ENCODE measurements at regions of chr3 and their contacts with region 1.

Region 1: DNA sequence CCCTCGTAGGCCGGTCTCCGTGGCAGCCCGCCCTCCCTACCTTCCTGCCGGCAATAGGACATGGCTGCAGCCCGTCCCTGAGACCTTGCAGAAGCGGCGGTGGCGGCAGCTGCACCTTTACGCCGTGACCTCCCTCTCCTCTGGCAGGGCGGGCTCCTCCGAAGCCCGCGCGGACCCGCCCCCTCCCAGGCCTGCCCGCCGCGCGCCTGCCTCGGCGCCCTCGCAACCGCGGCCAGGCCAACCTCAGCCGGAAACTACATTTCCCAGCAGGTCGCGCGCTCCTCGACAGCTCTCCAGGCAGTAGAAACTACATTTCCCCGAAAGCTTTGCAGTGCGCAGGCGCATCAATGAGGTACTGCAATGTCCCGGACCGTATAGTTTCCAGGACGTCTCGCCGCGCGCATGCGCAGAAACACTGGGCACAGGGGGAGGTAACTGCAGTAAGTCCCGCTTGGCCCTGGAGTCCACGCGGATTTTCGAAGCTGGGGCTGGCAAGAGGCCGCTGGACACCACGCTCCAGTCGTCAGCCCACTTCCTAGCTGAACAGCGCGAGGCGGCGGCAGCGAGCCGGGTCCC is at the starts of genes CHCHD4 and TMEM43:
- DNase-seq: peak; percentile 98
- H3K4me3 ChIP-seq: peak within 1 kb of the TSS; percentile 89 to 99 (median 95)
- H3K27ac ChIP-seq: peak within 1 kb of the TSS; percentile 97 to 98
- H3K4me1 ChIP-seq: peaks cover 0 to 23% of the 10 kb centered on the region in 2 donors
- H3K27me3 ChIP-seq: no peaks in the 10 kb centered on the region
- CTCF ChIP-seq: peak in 2 of 3 donors; percentile 6 to 16
- POLR2A ChIP-seq: peak; percentile 55
- total RNA-seq, gene CHCHD4: 15.1 to 19.9 (median 17.9) TPM
- total RNA-seq, gene TMEM43: 90.5 to 170 (median 93.4) TPM

Region 2: GRCh38 chr3:12896063-12896985 is 1228.4 kb before region 1 on chr3:
- intact Hi-C with region 1: loop called (anchors 5 kb)
- DNase-seq: no peak
- H3K4me3 ChIP-seq: no peak overlapping the region
- H3K27ac ChIP-seq: no peak overlapping the region
- H3K4me1 ChIP-seq: no peaks in the 10 kb centered on the region
- H3K27me3 ChIP-seq: no peaks in the 10 kb centered on the region
- CTCF ChIP-seq: no peak
- POLR2A ChIP-seq: no peak

Region 3: GRCh38 chr3:13895155-13896105 is 229.3 kb before region 1 on chr3:
- intact Hi-C with region 1: loop called (anchors 10 kb)
- DNase-seq: peak; percentile 92 to 96
- H3K4me3 ChIP-seq: peak overlapping the region; percentile 62 to 83 (median 66)
- H3K27ac ChIP-seq: peak overlapping the region; percentile 72
- H3K4me1 ChIP-seq: peaks cover 5 to 10% of the 10 kb centered on the region in 2 donors
- H3K27me3 ChIP-seq: no peaks in the 10 kb centered on the region
- CTCF ChIP-seq: no peak
- POLR2A ChIP-seq: peak; percentile 60